ENCODE measurements at regions of chr6 and their contacts with region 1.

Region 1: GRCh38 chr6:125568609-125569008 is 180.8 kb upstream of the HEY2 start:
- DNase-seq: no peak
- H3K4me3 Mint-ChIP-seq: no peak overlapping the region
- H3K27ac Mint-ChIP-seq: no peak overlapping the region
- H3K4me1 Mint-ChIP-seq: no peaks in the 10 kb centered on the region
- H3K27me3 Mint-ChIP-seq: peaks cover 11% of the 10 kb centered on the region

Region 2: GRCh38 chr6:125469915-125470314 is 98.7 kb before region 1 on chr6:
- intact Hi-C with region 1: no loop called
- DNase-seq: no peak
- H3K4me3 Mint-ChIP-seq: no peak overlapping the region
- H3K27ac Mint-ChIP-seq: no peak overlapping the region
- H3K4me1 Mint-ChIP-seq: no peaks in the 10 kb centered on the region
- H3K27me3 Mint-ChIP-seq: peaks cover 3% of the 10 kb centered on the region

Region 3: DNA sequence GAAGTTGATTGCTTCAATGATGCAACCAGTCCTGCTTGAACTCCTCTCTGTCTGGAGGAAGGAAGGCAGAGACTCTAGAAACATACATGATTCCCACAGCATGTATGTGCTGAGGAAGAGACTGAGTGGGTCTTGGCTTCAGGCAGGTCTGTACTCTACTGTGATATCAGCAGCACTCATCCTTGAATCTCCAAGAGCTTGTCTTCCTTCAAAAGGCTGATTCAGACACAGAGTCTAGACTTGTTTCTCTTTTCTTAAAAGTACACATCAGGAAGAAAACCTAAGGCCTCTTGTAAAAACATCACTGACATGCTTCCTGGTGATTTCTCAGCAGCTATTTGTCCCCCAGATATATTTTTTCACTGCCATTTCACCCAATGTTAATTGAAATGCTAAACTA is 25.1 kb after region 1 on chr6:
- intact Hi-C with region 1: loop called (anchors 1 kb)
- DNase-seq: no peak
- H3K4me3 Mint-ChIP-seq: no peak overlapping the region
- H3K27ac Mint-ChIP-seq: no peak overlapping the region
- H3K4me1 Mint-ChIP-seq: no peaks in the 10 kb centered on the region
- H3K27me3 Mint-ChIP-seq: peaks cover 2% of the 10 kb centered on the region